A549 (cell line): ENCODE measurements at regions of chr7 and their contacts with region 1.

Region 1: GRCh38 chr7:94087664-94088352 is 83.7 kb upstream of the BET1 start:
- DNase-seq: peak; percentile 72 to 81
- ATAC-seq: peak; percentile 96 to 98
- H3K4me3 ChIP-seq: peak overlapping the region; percentile 34
- H3K27ac ChIP-seq: peak overlapping the region; percentile 72 to 82
- H3K4me1 ChIP-seq: peaks cover 19% of the 10 kb centered on the region
- CTCF ChIP-seq: peak; percentile 91
- EP300 ChIP-seq: no peak
- POLR2A ChIP-seq: no peak
- RAD21 ChIP-seq: peak; percentile 86 to 92

Region 2: DNA sequence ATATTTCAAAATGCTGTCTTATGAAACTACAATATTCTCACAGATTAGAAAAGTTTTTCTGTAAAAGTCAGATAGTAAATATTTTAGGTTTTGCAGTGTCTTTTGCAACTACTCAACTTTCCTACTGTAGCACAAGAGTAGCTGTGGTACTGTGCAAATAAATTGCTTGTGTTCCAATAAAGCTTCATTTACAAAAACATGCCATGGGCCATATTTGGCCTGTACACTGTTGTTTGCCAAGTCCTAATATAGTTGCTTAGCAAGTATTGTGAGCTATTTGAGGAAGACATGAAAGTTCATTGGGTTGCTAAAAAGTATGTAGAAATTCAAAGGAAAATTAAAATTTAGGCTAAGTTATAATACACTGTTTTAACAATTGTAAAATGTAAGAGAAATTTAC is 277.2 kb before region 1 on chr7:
- CTCF ChIA-PET with region 1: interaction called, 3 read pairs
- POLR2A ChIA-PET with region 1: interaction called, 17 read pairs
- DNase-seq: no peak
- ATAC-seq: no peak
- H3K4me3 ChIP-seq: no peak overlapping the region
- H3K27ac ChIP-seq: no peak overlapping the region
- H3K4me1 ChIP-seq: no peaks in the 10 kb centered on the region
- CTCF ChIP-seq: no peak
- EP300 ChIP-seq: no peak
- POLR2A ChIP-seq: no peak
- RAD21 ChIP-seq: no peak

Region 3: GRCh38 chr7:93895859-93896600 is 191.8 kb before region 1 on chr7:
- CTCF ChIA-PET with region 1: interaction called, 45 read pairs
- POLR2A ChIA-PET with region 1: interaction called, 4 read pairs
- DNase-seq: no peak
- ATAC-seq: no peak
- H3K4me3 ChIP-seq: no peak overlapping the region
- H3K27ac ChIP-seq: no peak overlapping the region
- H3K4me1 ChIP-seq: peaks cover 34% of the 10 kb centered on the region
- CTCF ChIP-seq: no peak
- EP300 ChIP-seq: no peak
- POLR2A ChIP-seq: no peak
- RAD21 ChIP-seq: no peak

Region 4: GRCh38 chr7:93921607-93922566 is 165.9 kb before region 1 on chr7 and contains the start of gene GNG11:
- CTCF ChIA-PET with region 1: interaction called, 12 read pairs
- POLR2A ChIA-PET with region 1: interaction called, 3 read pairs
- DNase-seq: peak; percentile 38 to 79
- ATAC-seq: peak; percentile 89 to 94
- H3K4me3 ChIP-seq: peak within 1 kb of the TSS; percentile 74
- H3K27ac ChIP-seq: peak within 1 kb of the TSS; percentile 75 to 99
- H3K4me1 ChIP-seq: peaks cover 11% of the 10 kb centered on the region; the same call in 2 of the 3 replicates
- CTCF ChIP-seq: no peak
- EP300 ChIP-seq: 0 out of 5 replicates have a peak, but pooled peaks of 1 of the 2 experiments have one; percentile 21
- POLR2A ChIP-seq: peak; percentile 47
- RAD21 ChIP-seq: 0 out of 5 replicates have a peak, but pooled peaks of 1 of the 2 experiments have one; percentile 19
- polyA plus RNA-seq, gene GNG11: 23.4 and 31.1 TPM in 2 replicates

Region 5: DNA sequence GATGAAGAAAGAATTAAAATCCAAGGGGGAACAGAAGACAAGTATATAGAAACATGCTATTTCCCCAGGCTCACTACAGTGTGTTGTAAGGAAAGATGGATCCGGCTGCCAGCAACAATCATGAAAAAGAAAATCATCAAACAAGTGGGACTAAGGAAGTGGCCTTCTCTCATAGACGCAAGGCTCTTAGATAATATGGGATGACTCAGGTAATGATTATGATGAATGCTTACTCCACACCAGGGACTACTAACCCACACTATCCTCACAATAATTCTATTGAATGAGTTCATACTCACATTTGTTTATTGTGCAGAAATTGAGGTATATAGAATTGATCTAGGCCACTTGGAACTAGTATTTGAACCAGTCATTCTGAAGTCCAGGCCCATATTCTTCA is 27.5 kb after region 1 on chr7:
- CTCF ChIA-PET with region 1: no interaction called
- POLR2A ChIA-PET with region 1: no interaction called
- DNase-seq: no peak
- ATAC-seq: no peak
- H3K4me3 ChIP-seq: no peak overlapping the region
- H3K27ac ChIP-seq: no peak overlapping the region
- H3K4me1 ChIP-seq: no peaks in the 10 kb centered on the region
- CTCF ChIP-seq: no peak
- EP300 ChIP-seq: no peak
- POLR2A ChIP-seq: no peak
- RAD21 ChIP-seq: no peak